ENCODE measurements at regions of chr11 and their contacts with region 1.

Region 1: GRCh38 chr11:58675334-58676155 is 53.1 kb downstream of the CNTF start:
- DNase-seq: peak; percentile 75 to 87
- ATAC-seq: peak; percentile 85 to 96 (median 86)
- H3K4me3 ChIP-seq: no peak overlapping the region
- H3K27ac ChIP-seq: no peak overlapping the region
- H3K4me1 ChIP-seq: no peaks in the 10 kb centered on the region
- H3K27me3 ChIP-seq: peaks cover 0 to 4% (median 0%) of the 10 kb centered on the region in 3 donors
- CTCF ChIP-seq: peak; percentile 90

Region 2: DNA sequence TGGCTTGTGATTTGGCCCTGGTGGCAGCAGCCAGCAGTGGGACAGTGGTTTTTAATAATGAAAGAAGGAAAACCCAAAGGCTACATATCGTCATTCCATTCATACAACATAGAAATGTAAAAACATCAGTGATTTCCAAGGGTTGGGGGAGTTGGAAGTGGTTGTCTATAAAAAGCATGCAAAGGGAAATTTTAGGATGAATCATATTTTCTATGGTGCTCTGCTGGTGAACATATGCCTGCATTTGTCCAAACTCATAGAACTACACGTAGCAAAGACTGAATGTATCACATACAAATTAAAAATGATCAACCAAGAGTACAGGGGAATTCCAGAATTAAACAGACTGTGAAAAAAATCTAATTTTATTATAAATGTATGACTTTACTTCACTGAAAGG is 280.0 kb before region 1 on chr11:
- intact Hi-C with region 1: no loop called
- DNase-seq: no peak
- ATAC-seq: no peak
- H3K4me3 ChIP-seq: no peak overlapping the region
- H3K27ac ChIP-seq: no peak overlapping the region
- H3K4me1 ChIP-seq: no peaks in the 10 kb centered on the region
- H3K27me3 ChIP-seq: no peaks in the 10 kb centered on the region
- CTCF ChIP-seq: no peak

Region 3: DNA sequence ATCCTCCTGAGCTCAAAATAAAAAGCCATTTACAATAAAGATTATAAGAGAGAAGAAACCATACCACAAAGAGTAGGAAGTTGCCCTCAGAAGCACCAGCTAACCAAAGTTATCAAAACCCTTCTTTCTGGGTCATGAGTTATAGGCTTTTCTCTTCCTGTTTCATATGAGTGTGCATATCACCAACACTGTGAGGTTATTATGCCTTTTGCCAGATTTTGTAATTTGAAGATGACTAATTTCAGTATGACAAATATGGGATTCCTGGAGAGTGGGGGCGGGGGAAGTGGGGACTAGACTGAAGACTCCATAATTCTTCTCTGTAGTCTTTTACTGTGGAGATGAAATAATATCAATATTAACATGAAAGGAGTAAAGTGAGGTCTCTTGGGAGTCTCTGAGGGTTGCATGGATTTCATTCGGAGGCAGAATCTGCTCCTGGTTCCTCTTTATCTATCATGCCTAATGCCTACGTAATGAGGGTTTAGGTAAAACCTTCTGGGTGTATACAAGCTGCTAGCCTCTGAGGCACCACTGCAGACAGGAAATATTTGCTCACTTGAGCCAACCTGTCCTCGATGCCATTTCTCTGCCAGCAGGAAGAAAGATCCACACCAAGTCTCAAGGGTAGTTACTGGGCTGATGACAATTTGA is 102.0 kb before region 1 on chr11:
- intact Hi-C with region 1: loop called (anchors 2 to 5 kb)
- DNase-seq: peak; percentile 67
- ATAC-seq: no peak
- H3K4me3 ChIP-seq: peak overlapping the region; percentile 9
- H3K27ac ChIP-seq: peak overlapping the region; percentile 100
- H3K4me1 ChIP-seq: peaks cover 46% of the 10 kb centered on the region
- H3K27me3 ChIP-seq: no peaks in the 10 kb centered on the region
- CTCF ChIP-seq: no peak

Region 4: GRCh38 chr11:58629857-58630256 is 45.7 kb before region 1 on chr11:
- intact Hi-C with region 1: loop called in 1 of 2 experiments (anchors 2 kb)
- DNase-seq: no peak
- ATAC-seq: peak in 3 of 4 donors; percentile 34 to 51 (median 43)
- H3K4me3 ChIP-seq: no peak overlapping the region
- H3K27ac ChIP-seq: no peak overlapping the region
- H3K4me1 ChIP-seq: peaks cover 19% of the 10 kb centered on the region
- H3K27me3 ChIP-seq: no peaks in the 10 kb centered on the region
- CTCF ChIP-seq: peak; percentile 33